ENCODE measurements at regions of chr1 and their contacts with region 1.

Region 1: GRCh38 chr1:159867683-159868064 is 5.2 kb upstream of the VSIG8 start:
- DNase-seq: no peak
- ATAC-seq: no peak
- H3K4me3 ChIP-seq: no peak overlapping the region
- H3K27ac ChIP-seq: no peak overlapping the region
- H3K4me1 ChIP-seq: peaks cover 13 to 15% of the 10 kb centered on the region in 2 experiments
- H3K27me3 ChIP-seq: peaks cover 2 to 23% of the 10 kb centered on the region in 2 experiments; a peak in 2 of 5 replicates
- CTCF ChIP-seq: no peak
- EP300 ChIP-seq: no peak
- POLR2A ChIP-seq: no peak
- RAD21 ChIP-seq: no peak

Region 2: DNA sequence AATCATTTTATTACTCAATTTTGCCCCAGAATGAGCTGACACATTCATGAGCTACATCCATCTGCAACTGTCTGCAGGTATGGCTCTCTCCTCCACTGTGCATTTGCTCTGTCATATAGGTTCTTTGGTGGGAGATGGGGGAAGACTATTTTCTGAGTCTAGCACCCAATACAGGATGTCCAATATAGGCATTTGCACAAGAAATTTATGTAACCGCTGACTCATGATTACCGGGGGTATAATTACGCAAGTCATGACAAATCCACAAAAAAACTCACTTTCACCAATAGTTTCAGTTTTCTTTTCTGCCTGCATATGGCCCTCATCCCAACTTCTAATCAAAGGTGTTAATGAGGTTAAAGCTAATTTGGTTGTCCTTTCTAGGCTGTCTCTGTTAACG is 12.3 kb after region 1 on chr1:
- CTCF ChIA-PET with region 1: no interaction called
- POLR2A ChIA-PET with region 1: interaction called, 21 read pairs
- in situ Hi-C with region 1: no loop called
- intact Hi-C with region 1: no loop called
- DNase-seq: peak in 2 of 4 experiments; percentile 26 to 48
- ATAC-seq: peak; percentile 30; the same call in 2 of the 3 replicates
- H3K4me3 ChIP-seq: no peak overlapping the region
- H3K27ac ChIP-seq: peak overlapping the region; percentile 34; the same call in 1 of the 3 replicates
- H3K4me1 ChIP-seq: peaks cover 4 to 43% of the 10 kb centered on the region in 2 experiments; a peak in 4 of 5 replicates
- H3K27me3 ChIP-seq: no peaks in the 10 kb centered on the region; a peak in 1 of 5 replicates
- CTCF ChIP-seq: no peak
- EP300 ChIP-seq: peak; percentile 37; the same call in 1 of the 2 replicates
- POLR2A ChIP-seq: no peak
- RAD21 ChIP-seq: no peak

Region 3: GRCh38 chr1:160040476-160040875 is 172.8 kb after region 1 on chr1:
- CTCF ChIA-PET with region 1: no interaction called
- POLR2A ChIA-PET with region 1: no interaction called
- in situ Hi-C with region 1: no loop called
- intact Hi-C with region 1: no loop called
- DNase-seq: no peak
- ATAC-seq: no peak
- H3K4me3 ChIP-seq: no peak overlapping the region
- H3K27ac ChIP-seq: no peak overlapping the region
- H3K4me1 ChIP-seq: no peaks in the 10 kb centered on the region
- H3K27me3 ChIP-seq: peaks cover 20 to 32% of the 10 kb centered on the region in 2 experiments
- CTCF ChIP-seq: no peak
- EP300 ChIP-seq: no peak
- POLR2A ChIP-seq: no peak
- RAD21 ChIP-seq: no peak

Region 4: DNA sequence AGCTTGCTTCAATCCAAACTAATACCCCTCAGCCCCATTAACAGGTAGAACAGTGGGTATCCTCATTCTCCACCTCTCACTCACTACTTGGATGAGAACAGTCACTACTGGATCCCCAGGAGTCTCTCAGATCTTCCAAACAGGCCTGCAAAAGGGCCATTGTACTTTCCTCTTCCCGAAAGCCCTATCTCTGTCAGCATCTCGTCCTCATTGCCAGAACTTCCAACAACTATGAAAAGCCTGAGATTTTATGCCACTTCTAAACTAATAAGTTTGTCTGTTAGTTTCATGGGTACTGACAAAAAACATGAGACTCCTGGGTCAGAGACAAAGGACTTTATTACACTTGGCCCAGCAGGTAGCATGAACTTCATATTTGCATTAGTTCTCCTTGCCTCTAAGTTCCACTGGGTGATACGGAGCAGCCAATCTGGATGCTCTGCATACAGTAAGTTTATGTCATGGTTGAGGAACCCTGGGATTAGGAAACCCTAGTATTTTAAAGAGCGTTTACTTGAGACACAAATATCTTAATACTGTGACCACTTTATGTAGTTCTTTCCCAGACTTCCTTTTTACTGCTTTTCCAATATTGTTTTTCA is 570.7 kb after region 1 on chr1:
- CTCF ChIA-PET with region 1: no interaction called
- POLR2A ChIA-PET with region 1: no interaction called
- in situ Hi-C with region 1: no loop called
- intact Hi-C with region 1: no loop called
- DNase-seq: peak in 1 of 4 experiments; percentile 20
- ATAC-seq: peak; percentile 83
- H3K4me3 ChIP-seq: 0 out of 2 replicates have a peak overlapping the region, but pooled peaks have one; percentile 14
- H3K27ac ChIP-seq: peak overlapping the region; percentile 21; the same call in 1 of the 3 replicates
- H3K4me1 ChIP-seq: peaks cover 0 to 14% of the 10 kb centered on the region in 2 experiments; a peak in 3 of 5 replicates
- H3K27me3 ChIP-seq: no peaks in the 10 kb centered on the region
- CTCF ChIP-seq: no peak
- EP300 ChIP-seq: no peak
- POLR2A ChIP-seq: no peak
- RAD21 ChIP-seq: no peak